ENCODE measurements at regions of chr7 and their contacts with region 1.

Region 1: GRCh38 chr7:23273141-23273599 is 26.0 kb upstream of the MALSU1 start:
- DNase-seq: peak; percentile 89
- ATAC-seq: peak; percentile 98
- H3K4me3 ChIP-seq: peak overlapping the region; percentile 20 to 47 (median 37); a peak in 5 of 6 replicates
- H3K27ac ChIP-seq: peak overlapping the region; percentile 53
- H3K4me1 ChIP-seq: peaks cover 40% of the 10 kb centered on the region
- H3K27me3 ChIP-seq: no peaks in the 10 kb centered on the region
- CTCF ChIP-seq: peak; percentile 95
- EP300 ChIP-seq: peak in 1 of 2 experiments; percentile 41; a peak in 1 of 4 replicates
- POLR2A ChIP-seq: no peak
- RAD21 ChIP-seq: peak; percentile 90

Region 2: DNA sequence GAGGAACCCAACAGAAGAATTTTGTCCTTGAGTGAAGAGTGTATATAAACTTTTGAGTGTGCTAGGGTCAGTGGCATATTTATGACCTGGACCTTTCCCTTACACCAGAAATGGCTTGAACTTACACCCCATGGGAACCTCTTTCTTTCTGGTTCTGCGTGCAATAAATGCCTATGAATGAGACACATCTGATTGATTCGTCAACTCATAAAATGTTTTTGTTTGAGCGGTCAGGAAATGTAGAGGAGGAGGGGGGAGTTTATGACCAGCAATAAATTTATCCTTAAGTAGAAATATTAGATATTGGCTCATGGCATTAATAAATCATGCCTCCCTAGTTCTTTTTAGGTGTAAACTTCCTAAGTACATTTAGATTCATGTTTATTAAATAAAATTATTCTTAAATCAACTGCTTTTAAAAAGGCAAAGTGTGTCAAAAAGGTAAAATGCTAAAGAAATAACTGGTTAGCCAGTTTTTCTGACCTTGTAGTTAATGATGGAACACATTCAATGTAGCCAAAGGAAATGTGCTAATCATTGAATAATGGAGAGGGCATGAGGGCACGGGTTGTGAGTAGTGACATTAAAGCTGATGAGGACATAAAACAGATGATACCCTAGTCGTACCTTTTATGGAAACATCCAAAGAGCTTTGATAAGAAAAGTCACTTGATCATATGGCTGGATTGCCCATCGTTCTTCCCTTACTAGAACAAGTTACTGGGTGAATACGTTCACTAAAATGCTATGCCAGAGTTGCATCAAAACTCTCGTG is 104.9 kb before region 1 on chr7:
- CTCF ChIA-PET with region 1: no interaction called
- POLR2A ChIA-PET with region 1: no interaction called
- in situ Hi-C with region 1: no loop called
- intact Hi-C with region 1: no loop called
- DNase-seq: no peak
- ATAC-seq: no peak
- H3K4me3 ChIP-seq: no peak overlapping the region
- H3K27ac ChIP-seq: no peak overlapping the region
- H3K4me1 ChIP-seq: no peaks in the 10 kb centered on the region
- H3K27me3 ChIP-seq: no peaks in the 10 kb centered on the region
- CTCF ChIP-seq: no peak
- EP300 ChIP-seq: no peak
- POLR2A ChIP-seq: no peak
- RAD21 ChIP-seq: no peak

Region 3: GRCh38 chr7:23181684-23182553 is 91.3 kb before region 1 on chr7 and contains the start of gene NUP42:
- CTCF ChIA-PET with region 1: no interaction called
- POLR2A ChIA-PET with region 1: no interaction called
- in situ Hi-C with region 1: no loop called
- intact Hi-C with region 1: loop called (anchors 1 kb)
- DNase-seq: peak; percentile 99
- ATAC-seq: peak; percentile 98
- H3K4me3 ChIP-seq: peak within 1 kb of the TSS; percentile 89 to 98 (median 92)
- H3K27ac ChIP-seq: peak within 1 kb of the TSS; percentile 90
- H3K4me1 ChIP-seq: peaks cover 34% of the 10 kb centered on the region
- H3K27me3 ChIP-seq: no peaks in the 10 kb centered on the region; a peak in 1 of 5 replicates
- CTCF ChIP-seq: peak; percentile 22; the same call in 1 of the 2 replicates
- EP300 ChIP-seq: peak in 1 of 2 experiments; percentile 57; a peak in 2 of 4 replicates
- POLR2A ChIP-seq: peak; percentile 90 to 94
- RAD21 ChIP-seq: no peak; the same call in 1 of the 2 replicates
- total RNA-seq, gene NUP42: 51.5 and 52.4 TPM in 2 replicates

Region 4: DNA sequence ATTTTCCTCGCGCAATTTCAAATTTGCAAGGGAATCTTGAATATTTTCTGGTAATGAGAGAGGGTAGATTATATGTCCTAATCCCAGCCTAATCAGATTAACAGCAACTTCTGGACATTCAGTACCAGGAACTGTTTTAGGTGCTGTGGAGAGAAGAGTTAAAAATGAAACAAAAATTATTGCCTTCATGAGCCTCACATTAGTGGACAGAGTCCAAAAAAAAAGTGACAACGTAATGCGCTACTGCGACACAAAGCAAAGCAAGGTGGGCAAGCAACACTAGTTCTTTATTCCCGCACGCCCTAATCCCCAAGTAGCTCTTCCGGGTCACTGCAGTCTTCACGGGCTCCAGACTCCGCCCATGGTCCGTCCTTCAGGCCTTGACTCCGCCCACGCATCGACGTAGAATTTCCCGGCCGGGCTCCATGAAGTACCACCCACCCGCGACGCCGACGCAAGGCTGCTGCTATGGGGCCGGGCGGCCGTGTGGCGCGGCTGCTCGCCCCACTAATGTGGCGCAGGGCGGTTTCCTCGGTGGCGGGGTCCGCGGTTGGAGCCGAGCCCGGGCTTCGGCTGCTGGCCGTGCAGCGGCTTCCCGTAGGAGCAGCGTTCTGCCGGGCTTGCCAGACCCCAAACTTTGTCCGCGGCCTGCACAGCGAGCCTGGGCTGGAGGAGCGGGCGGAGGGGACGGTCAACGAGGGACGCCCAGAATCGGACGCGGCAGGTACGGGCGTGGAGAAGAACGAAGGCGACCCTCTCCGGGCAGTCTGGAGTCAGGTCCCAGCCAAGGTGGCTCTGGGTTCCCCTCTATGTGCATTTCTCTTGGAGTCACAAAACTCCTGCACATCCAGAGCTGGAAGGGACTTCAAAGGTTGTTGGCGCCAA is 26.0 kb after region 1 on chr7 and contains the start of gene MALSU1:
- CTCF ChIA-PET with region 1: no interaction called
- POLR2A ChIA-PET with region 1: interaction called, 15 read pairs
- in situ Hi-C with region 1: no loop called
- intact Hi-C with region 1: loop called (anchors 1 kb)
- DNase-seq: peak; percentile 96
- ATAC-seq: peak; percentile 86
- H3K4me3 ChIP-seq: peak within 1 kb of the TSS; percentile 66 to 94 (median 93)
- H3K27ac ChIP-seq: peak within 1 kb of the TSS; percentile 89
- H3K4me1 ChIP-seq: peaks cover 74% of the 10 kb centered on the region
- H3K27me3 ChIP-seq: no peaks in the 10 kb centered on the region; a peak in 1 of 5 replicates
- CTCF ChIP-seq: no peak
- EP300 ChIP-seq: no peak
- POLR2A ChIP-seq: peak; percentile 90 to 92
- RAD21 ChIP-seq: peak; percentile 49; the same call in 1 of the 2 replicates
- total RNA-seq, gene MALSU1: 141 and 188 TPM in 2 replicates

Region 5: DNA sequence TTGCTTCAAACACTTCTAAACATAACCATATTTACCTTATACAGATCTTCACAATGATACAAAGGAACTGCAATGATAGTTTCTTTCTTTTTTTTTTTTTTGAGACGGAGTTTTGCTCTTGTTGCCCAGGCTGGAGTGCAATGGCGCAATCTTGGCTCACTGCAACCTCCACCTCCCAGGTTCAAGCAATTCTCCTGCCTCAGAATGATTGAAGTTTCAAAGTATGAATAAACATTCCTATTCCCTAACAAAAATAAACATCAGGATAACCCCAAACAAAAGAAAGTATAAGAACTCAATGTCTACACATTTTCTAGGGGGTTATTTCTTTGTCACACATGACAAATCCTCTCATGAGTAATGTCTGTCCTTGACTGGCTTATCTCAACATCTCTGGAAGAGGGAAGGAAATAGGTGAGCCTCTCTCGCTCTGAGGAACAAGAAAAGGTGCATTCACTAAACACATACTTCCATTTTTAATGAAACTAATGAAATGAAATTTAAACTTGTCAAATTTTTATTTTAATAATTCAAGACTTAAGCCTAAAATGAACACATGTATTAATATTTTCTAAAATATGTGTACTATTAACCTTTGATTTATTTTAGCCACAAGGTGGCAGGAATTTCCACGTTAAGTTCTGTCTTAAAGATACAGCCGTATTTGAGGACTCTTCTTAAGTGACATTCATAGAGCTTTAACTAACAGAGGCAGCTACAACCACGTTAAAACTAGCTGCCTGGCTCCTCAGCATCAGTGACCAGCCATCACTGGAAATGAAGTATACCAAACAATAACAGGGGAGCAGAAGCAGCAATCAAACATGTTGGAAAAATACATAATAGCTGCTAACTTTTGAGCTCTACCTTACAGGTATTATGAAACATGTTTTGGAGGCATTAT is 84.3 kb after region 1 on chr7:
- CTCF ChIA-PET with region 1: no interaction called
- POLR2A ChIA-PET with region 1: interaction called, 4 read pairs
- in situ Hi-C with region 1: no loop called
- intact Hi-C with region 1: loop called (anchors 1 kb)
- DNase-seq: peak; percentile 91
- ATAC-seq: peak; percentile 67
- H3K4me3 ChIP-seq: peak overlapping the region in 1 of 3 experiments; percentile 36; a peak in 1 of 6 replicates
- H3K27ac ChIP-seq: peak overlapping the region; percentile 82
- H3K4me1 ChIP-seq: peaks cover 71% of the 10 kb centered on the region
- H3K27me3 ChIP-seq: no peaks in the 10 kb centered on the region
- CTCF ChIP-seq: peak; percentile 40
- EP300 ChIP-seq: peak in 1 of 2 experiments; percentile 83; a peak in 2 of 4 replicates
- POLR2A ChIP-seq: no peak
- RAD21 ChIP-seq: no peak

Region 6: GRCh38 chr7:23520582-23520981 is 247.4 kb after region 1 on chr7:
- CTCF ChIA-PET with region 1: interaction called, 6 read pairs
- POLR2A ChIA-PET with region 1: no interaction called
- in situ Hi-C with region 1: loop called (anchors 10 kb)
- intact Hi-C with region 1: no loop called
- DNase-seq: no peak
- ATAC-seq: no peak; the same call in 2 of the 3 replicates
- H3K4me3 ChIP-seq: no peak overlapping the region
- H3K27ac ChIP-seq: no peak overlapping the region
- H3K4me1 ChIP-seq: peaks cover 29% of the 10 kb centered on the region
- H3K27me3 ChIP-seq: no peaks in the 10 kb centered on the region
- CTCF ChIP-seq: peak; percentile 46
- EP300 ChIP-seq: no peak
- POLR2A ChIP-seq: no peak
- RAD21 ChIP-seq: no peak

Region 7: GRCh38 chr7:23546897-23547572 is 273.9 kb after region 1 on chr7:
- CTCF ChIA-PET with region 1: interaction called, 8 read pairs
- POLR2A ChIA-PET with region 1: no interaction called
- in situ Hi-C with region 1: no loop called
- intact Hi-C with region 1: loop called (anchors 1 kb)
- DNase-seq: peak; percentile 87
- ATAC-seq: peak; percentile 83
- H3K4me3 ChIP-seq: no peak overlapping the region
- H3K27ac ChIP-seq: no peak overlapping the region
- H3K4me1 ChIP-seq: peaks cover 7% of the 10 kb centered on the region; the same call in 1 of the 2 replicates
- H3K27me3 ChIP-seq: peaks cover 0 to 2% of the 10 kb centered on the region in 2 experiments; a peak in 1 of 5 replicates
- CTCF ChIP-seq: peak; percentile 86
- EP300 ChIP-seq: no peak
- POLR2A ChIP-seq: no peak
- RAD21 ChIP-seq: peak; percentile 82